ENCODE measurements at regions of chr9 and their contacts with region 1.

Region 1: GRCh38 chr9:123081824-123082223 is 48.4 kb downstream of the GPR21 start:
- DNase-seq: peak in 1 of 4 donors; percentile 48
- ATAC-seq: peak; percentile 59
- H3K4me3 ChIP-seq: no peak overlapping the region
- H3K27ac ChIP-seq: no peak overlapping the region
- H3K4me1 ChIP-seq: no peaks in the 10 kb centered on the region
- H3K27me3 ChIP-seq: no peaks in the 10 kb centered on the region
- CTCF ChIP-seq: peak in 1 of 2 donors; percentile 31

Region 2: DNA sequence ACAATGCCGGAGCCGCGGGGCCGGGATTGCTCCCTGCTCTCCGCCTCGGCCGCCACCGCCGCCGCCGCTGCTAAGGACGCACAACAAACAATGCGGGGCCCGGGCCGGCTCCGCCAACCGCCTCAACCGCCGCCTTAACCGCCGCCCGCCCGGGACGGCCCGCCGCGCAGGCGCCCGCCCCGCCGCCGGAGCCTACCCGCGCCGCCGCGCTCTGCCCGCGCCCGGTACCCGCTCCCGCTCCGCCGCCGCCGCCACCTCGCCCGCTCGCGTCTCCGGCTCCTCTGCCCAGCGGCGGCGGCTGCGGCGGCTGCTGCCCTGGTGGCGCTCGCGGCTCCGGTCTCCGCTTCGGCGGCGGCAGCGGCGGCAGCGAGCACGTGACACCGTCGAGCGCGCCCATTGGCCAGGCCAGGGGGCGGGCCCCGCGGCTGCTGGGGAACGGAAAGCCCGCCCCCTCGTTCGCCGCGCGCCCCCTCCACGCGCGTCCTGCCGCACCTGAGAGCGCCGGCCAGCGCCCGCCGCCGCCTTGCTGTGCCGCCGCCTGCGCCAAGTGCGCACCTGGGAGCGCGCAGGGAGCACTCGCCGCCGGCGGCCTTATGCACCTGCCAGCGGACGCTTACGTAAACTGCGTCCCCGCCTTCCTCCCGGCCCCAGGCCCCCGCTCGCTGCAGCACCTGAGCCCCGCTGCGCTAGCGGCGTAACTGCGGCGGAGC is 186.6 kb after region 1 on chr9 and contains the start of gene STRBP:
- intact Hi-C with region 1: no loop called
- DNase-seq: peak; percentile 81 to 98 (median 92)
- ATAC-seq: peak; percentile 98
- H3K4me3 ChIP-seq: peak within 1 kb of the TSS; percentile 67 to 85
- H3K27ac ChIP-seq: peak within 1 kb of the TSS; percentile 63 to 69
- H3K4me1 ChIP-seq: peaks cover 0 to 16% of the 10 kb centered on the region in 2 donors
- H3K27me3 ChIP-seq: no peaks in the 10 kb centered on the region
- CTCF ChIP-seq: no peak
- polyA plus RNA-seq, gene STRBP: 33.4 to 40.4 (median 38.5) TPM

Region 3: DNA sequence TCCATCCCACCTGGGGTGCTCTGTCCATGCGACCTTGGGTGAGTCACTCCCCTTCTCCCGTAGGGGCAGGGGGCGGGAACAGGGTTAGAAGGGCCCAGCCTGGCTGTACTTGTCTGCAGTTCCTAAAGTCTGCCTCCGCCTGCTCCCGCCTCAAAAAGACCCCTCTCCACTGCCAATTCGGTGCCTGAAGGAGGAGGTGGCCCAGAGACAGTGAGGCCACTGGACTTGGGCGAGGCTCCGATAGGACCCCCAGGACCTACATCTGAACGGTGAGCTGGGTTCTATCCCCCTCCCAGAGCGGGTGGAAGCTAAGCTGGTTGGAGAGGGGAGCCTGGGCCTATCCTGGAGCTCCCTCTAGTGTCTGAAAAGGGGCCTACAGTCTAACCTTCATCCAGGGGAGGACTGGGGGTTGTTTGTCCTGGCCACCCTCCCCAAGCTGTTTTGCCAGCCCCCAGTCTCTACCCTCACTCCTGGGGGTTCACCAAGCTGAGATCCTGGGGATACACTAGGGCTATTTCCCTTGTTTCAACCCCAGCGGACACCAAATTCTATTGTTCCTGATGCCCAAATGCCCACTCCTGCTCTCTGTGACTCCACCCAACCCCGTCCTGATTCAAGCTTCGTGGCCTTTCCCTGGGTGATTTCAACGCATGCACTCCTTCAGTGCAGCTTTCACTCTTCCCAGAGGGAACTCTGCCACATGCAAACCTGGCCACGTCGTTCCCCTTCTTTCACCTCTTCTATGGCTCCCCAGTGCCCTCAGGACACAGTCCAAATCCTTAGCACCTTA is 268.1 kb after region 1 on chr9:
- intact Hi-C with region 1: loop called in 1 of 2 experiments (anchors 10 kb)
- DNase-seq: peak in 2 of 4 donors; percentile 50 to 65
- ATAC-seq: peak; percentile 91
- H3K4me3 ChIP-seq: no peak overlapping the region
- H3K27ac ChIP-seq: no peak overlapping the region
- H3K4me1 ChIP-seq: peaks cover 0 to 5% of the 10 kb centered on the region in 2 donors
- H3K27me3 ChIP-seq: peaks cover 0 to 45% of the 10 kb centered on the region in 2 donors
- CTCF ChIP-seq: peak; percentile 91 to 95

Measured in left lung (tissue), 14 donors.